Ovary (tissue), 10 donors: ENCODE measurements at regions of chr12 and their contacts with region 1.

Region 1: GRCh38 chr12:45273717-45274271 is 57.9 kb downstream of the ANO6 start:
- DNase-seq: peak in 1 of 5 donors; percentile 32
- H3K4me3 ChIP-seq: no peak overlapping the region
- H3K27ac ChIP-seq: no peak overlapping the region
- H3K4me1 ChIP-seq: peaks cover 14% of the 10 kb centered on the region
- H3K27me3 ChIP-seq: no peaks in the 10 kb centered on the region
- CTCF ChIP-seq: no peak
- EP300 ChIP-seq: no peak
- POLR2A ChIP-seq: no peak

Region 2: DNA sequence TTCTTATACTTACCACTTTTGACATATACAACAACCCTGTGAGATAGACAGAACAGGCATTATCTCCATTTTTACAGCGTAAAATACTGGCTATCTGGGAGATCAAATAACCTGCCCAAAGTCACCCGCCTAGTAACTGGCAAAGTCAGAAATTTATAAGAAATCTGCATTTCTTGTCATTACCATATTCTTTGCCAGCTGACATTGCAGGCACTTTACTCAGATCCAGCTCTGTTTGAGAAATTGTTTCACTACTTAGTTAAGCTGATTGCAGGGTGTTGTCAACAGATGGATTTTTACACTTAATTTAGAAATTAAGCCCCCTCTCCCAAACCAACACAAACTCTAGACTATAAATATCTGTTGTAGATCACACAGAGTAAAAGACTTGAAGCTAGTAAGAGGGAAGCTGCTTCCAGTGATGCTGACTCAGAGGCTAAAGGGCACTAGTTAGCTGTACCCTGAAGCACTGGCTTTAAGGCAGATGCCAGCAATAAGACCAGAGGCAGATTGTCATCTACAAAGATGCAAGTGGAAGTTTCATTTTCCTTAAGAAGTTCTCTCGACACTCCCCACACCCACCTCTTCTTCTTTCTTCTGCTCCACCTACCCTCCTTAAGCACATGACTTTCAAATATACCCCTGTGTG is 95.2 kb after region 1 on chr12:
- intact Hi-C with region 1: loop called in 1 of 4 experiments (anchors 10 kb)
- DNase-seq: no peak
- H3K4me3 ChIP-seq: no peak overlapping the region
- H3K27ac ChIP-seq: no peak overlapping the region
- H3K4me1 ChIP-seq: peaks cover 3% of the 10 kb centered on the region
- H3K27me3 ChIP-seq: no peaks in the 10 kb centered on the region
- CTCF ChIP-seq: no peak
- EP300 ChIP-seq: no peak
- POLR2A ChIP-seq: no peak